Heart left ventricle (tissue), 16 donors: ENCODE measurements at regions of chr10 and their contacts with region 1.

Region 1: GRCh38 chr10:109883859-109884771 is 39.2 kb downstream of the XPNPEP1 start:
- DNase-seq: peak; percentile 68 to 76 (median 72)
- ATAC-seq: peak; percentile 77 to 82 (median 80)
- H3K4me3 ChIP-seq: peak overlapping the region in 6 of 12 donors; percentile 14 to 40 (median 26)
- H3K27ac ChIP-seq: peak overlapping the region in 11 of 12 donors; percentile 11 to 71 (median 49)
- H3K4me1 ChIP-seq: peaks cover 0 to 35% (median 15%) of the 10 kb centered on the region in 12 donors
- H3K27me3 ChIP-seq: no peaks in the 10 kb centered on the region
- CTCF ChIP-seq: peak; percentile 90 to 98 (median 96)
- POLR2A ChIP-seq: no peak

Region 2: DNA sequence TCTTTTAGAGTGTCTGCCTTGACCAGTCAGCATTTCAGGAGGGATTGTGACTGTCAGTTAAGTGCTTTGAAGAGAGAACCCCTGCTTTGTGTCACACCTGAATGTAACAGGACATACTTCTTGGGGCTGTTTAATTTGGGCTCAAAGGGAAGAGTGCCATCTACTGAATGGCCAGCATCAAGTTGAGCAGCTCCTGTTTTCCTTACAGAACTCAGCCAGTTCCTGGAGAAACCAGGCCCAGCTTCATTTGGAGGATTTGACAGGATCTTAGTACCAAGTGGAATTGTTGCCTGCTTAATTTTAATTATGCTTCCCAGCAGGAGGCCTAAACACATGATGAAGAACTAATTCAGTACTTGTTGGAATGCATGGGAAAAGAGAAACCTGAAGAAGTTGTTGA is 131.9 kb after region 1 on chr10:
- intact Hi-C with region 1: loop called in 3 of 10 experiments (anchors 5 to 10 kb)
- DNase-seq: no peak
- ATAC-seq: peak; percentile 43 to 63 (median 54)
- H3K4me3 ChIP-seq: no peak overlapping the region
- H3K27ac ChIP-seq: peak overlapping the region in 10 of 12 donors; percentile 2 to 63 (median 42)
- H3K4me1 ChIP-seq: peaks cover 0 to 88% (median 64%) of the 10 kb centered on the region in 12 donors
- H3K27me3 ChIP-seq: no peaks in the 10 kb centered on the region
- CTCF ChIP-seq: peak in 7 of 12 donors; percentile 7 to 45 (median 25)
- POLR2A ChIP-seq: no peak

Region 3: GRCh38 chr10:110118891-110119621 is 234.9 kb after region 1 on chr10:
- intact Hi-C with region 1: loop called in 4 of 10 experiments (anchors 5 kb)
- DNase-seq: no peak
- ATAC-seq: peak; percentile 90 to 95 (median 91)
- H3K4me3 ChIP-seq: peak overlapping the region in 1 of 12 donors; percentile 21
- H3K27ac ChIP-seq: peak overlapping the region; percentile 38 to 91 (median 70)
- H3K4me1 ChIP-seq: peaks cover 3 to 16% (median 6%) of the 10 kb centered on the region in 12 donors
- H3K27me3 ChIP-seq: no peaks in the 10 kb centered on the region
- CTCF ChIP-seq: no peak
- POLR2A ChIP-seq: no peak

Region 4: DNA sequence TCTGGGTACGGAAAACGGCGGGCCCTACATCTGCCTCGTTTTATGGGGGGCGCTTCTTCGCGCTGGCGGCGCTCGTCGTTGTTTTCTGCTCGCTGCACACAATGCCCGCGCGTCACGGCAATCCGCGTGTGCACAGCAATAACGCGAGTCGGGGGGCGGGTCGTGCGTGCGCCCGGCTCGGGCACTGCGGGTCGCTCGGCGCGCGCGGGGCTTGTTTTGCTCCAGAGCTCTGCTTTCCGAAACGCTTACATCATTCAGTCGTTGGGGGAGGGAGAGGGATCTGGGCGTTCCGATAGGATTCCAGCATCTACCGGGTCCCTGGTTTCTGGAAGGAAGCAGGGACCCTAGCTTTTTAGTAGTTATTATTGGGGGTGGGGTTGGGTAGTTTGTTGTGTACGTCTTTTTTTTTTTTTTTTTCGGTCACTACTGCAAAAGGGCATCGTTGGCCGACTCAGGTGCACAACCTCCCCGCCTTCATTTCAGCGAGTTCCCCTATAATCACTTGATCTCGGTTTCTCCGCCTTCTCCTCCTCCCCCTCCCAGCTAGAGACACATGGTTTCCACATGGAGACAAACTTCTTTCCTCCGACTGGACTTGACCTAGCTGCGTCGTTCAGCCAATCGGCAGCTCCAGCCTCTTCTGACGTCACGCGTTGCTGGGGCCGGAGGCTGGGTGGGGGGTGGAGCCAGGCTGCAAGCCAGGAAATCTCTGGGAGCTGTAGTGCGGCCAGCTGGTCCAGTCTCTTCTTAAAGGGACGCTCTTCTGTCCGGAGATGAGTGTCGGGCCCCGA is 326.8 kb after region 1 on chr10:
- intact Hi-C with region 1: loop called in 2 of 10 experiments (anchors 5 to 10 kb)
- DNase-seq: peak; percentile 97 to 98 (median 97)
- ATAC-seq: peak; percentile 90 to 92 (median 91)
- H3K4me3 ChIP-seq: peak overlapping the region; percentile 61 to 92 (median 83)
- H3K27ac ChIP-seq: peak overlapping the region; percentile 94 to 99 (median 98)
- H3K4me1 ChIP-seq: peaks cover 11 to 51% (median 34%) of the 10 kb centered on the region in 12 donors
- H3K27me3 ChIP-seq: no peaks in the 10 kb centered on the region
- CTCF ChIP-seq: no peak
- POLR2A ChIP-seq: peak in 1 of 2 donors; percentile 76

Region 5: GRCh38 chr10:110279407-110279986 is 395.4 kb after region 1 on chr10:
- intact Hi-C with region 1: loop called in 8 of 10 experiments (anchors 5 to 10 kb)
- DNase-seq: peak in 4 of 5 donors; percentile 34 to 57 (median 50)
- ATAC-seq: peak; percentile 39 to 75 (median 69)
- H3K4me3 ChIP-seq: peak overlapping the region in 1 of 12 donors; percentile 27
- H3K27ac ChIP-seq: peak overlapping the region in 8 of 12 donors; percentile 2 to 46 (median 26)
- H3K4me1 ChIP-seq: peaks cover 0 to 64% (median 35%) of the 10 kb centered on the region in 12 donors
- H3K27me3 ChIP-seq: no peaks in the 10 kb centered on the region
- CTCF ChIP-seq: peak; percentile 62 to 90 (median 81)
- POLR2A ChIP-seq: no peak